Heart right ventricle (tissue), 16 donors: ENCODE measurements at regions of chr12 and their contacts with region 1.

Region 1: DNA sequence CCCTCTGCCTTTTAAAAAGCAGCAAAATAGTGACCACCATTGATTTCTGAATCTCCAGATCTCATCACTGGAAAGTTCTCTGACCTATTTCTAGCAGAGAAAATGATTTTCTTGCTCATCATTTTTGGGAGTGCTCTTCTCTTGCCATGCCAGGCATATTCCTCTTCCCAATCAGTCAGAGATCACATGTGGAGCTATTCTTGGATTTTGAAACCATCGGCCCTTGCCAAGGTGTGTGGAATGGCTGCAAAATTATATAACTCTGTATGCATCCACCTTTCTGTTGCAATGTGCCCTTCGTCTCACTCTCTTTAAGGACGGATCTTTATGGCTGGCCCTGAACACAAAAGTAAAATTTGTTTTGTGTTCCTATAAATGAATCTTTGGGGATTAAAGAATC is 25.5 kb upstream of the LDHB start:
- DNase-seq: peak in 1 of 2 donors; percentile 13
- ATAC-seq: peak in 4 of 8 donors; percentile 59 to 75 (median 68)
- H3K4me3 ChIP-seq: no peak overlapping the region
- H3K27ac ChIP-seq: peak overlapping the region in 4 of 10 donors; percentile 37 to 54 (median 46)
- H3K4me1 ChIP-seq: peaks cover 0 to 24% (median 3%) of the 10 kb centered on the region in 9 donors
- H3K27me3 ChIP-seq: no peaks in the 10 kb centered on the region
- CTCF ChIP-seq: no peak

Region 2: GRCh38 chr12:21308785-21309184 is 374.3 kb before region 1 on chr12:
- intact Hi-C with region 1: loop called in 1 of 10 experiments (anchors 5 kb)
- DNase-seq: no peak
- ATAC-seq: no peak
- H3K4me3 ChIP-seq: no peak overlapping the region
- H3K27ac ChIP-seq: no peak overlapping the region
- H3K4me1 ChIP-seq: no peaks in the 10 kb centered on the region
- H3K27me3 ChIP-seq: no peaks in the 10 kb centered on the region
- CTCF ChIP-seq: no peak

Region 3: DNA sequence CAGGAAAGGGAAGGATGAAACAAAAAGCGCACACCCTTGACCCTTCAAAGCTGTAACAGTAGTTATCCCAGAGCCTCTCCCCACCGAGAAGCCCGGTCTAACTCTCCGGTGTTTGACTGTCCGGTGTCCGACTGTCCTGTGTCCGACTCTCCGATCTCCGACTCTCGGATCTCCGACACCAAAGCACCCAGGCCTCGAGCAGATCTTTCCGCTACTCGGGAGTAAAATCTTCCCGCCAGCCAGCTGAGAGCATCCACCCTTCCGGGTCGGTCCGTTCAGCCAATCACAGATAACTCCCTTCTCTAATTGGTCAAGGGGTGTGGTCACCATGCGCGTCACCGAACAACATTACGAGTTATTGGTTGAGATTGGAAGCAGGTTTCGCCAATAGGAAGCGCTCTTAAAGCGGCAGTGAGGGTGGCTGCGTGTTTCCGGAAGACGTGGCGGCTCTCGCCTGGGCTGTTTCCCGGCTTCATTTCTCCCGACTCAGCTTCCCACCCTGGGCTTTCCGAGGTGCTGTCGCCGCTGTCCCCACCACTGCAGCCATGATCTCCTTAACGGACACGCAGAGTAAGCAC is 181.6 kb before region 1 on chr12 and contains the starts of genes GOLT1B and RECQL:
- intact Hi-C with region 1: loop called in 3 of 10 experiments (anchors 5 to 10 kb)
- DNase-seq: peak; percentile 78 to 95
- ATAC-seq: peak; percentile 99 to 100 (median 99)
- H3K4me3 ChIP-seq: peak within 1 kb of the TSS; percentile 74 to 98 (median 90)
- H3K27ac ChIP-seq: peak within 1 kb of the TSS; percentile 68 to 92 (median 88)
- H3K4me1 ChIP-seq: peaks cover 0 to 66% (median 51%) of the 10 kb centered on the region in 9 donors
- H3K27me3 ChIP-seq: no peaks in the 10 kb centered on the region
- CTCF ChIP-seq: no peak
- total RNA-seq, gene GOLT1B: 12.0 to 25.4 (median 18.8) TPM
- total RNA-seq, gene RECQL: 18.4 to 40.5 (median 24.6) TPM

Region 4: DNA sequence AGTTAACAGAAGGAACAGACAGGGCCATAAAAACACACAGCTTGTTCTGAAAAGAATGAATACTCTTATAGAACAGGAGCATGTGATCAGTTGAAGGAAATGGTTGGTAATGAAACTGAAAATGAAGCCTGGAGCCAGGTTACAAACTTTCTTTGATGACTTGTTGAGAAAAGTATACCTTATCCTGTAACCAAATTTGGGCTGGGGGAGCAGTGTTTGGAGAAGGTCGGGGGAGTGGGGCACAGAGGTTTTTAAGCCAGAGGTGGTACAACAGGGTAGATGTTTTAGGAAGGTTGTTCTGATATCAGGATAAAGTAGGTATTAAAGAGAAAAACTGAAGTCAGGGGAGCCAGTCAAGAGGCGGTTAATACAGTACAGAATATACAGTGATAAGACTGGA is 173.3 kb before region 1 on chr12:
- intact Hi-C with region 1: loop called in 2 of 10 experiments (anchors 5 to 10 kb)
- DNase-seq: no peak
- ATAC-seq: no peak
- H3K4me3 ChIP-seq: no peak overlapping the region
- H3K27ac ChIP-seq: no peak overlapping the region
- H3K4me1 ChIP-seq: peaks cover 0 to 14% (median 5%) of the 10 kb centered on the region in 9 donors
- H3K27me3 ChIP-seq: no peaks in the 10 kb centered on the region
- CTCF ChIP-seq: no peak

Region 5: DNA sequence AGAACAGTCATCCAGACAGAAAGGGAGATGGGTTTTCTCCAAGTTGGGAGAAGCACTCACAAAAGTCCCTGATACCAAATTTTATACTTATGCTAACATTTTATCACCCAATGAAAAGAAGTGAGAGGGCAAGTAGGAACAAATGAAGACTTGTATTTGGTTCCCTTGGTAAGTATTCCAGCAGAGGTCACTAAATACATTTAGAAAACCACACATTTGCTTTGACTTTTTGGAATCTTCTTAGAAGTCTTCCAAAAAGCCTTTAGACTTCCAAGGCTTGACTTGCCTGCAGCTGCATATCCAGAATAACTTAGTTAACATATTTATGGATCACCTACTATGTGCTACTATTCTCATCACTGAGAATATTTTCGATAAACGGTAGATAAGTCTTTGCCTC is 75.4 kb before region 1 on chr12:
- intact Hi-C with region 1: loop called in 9 of 10 experiments (anchors 1 to 5 kb)
- DNase-seq: no peak
- ATAC-seq: peak in 4 of 8 donors; percentile 27 to 63 (median 47)
- H3K4me3 ChIP-seq: no peak overlapping the region
- H3K27ac ChIP-seq: no peak overlapping the region
- H3K4me1 ChIP-seq: peaks cover 0 to 7% (median 0%) of the 10 kb centered on the region in 9 donors
- H3K27me3 ChIP-seq: no peaks in the 10 kb centered on the region
- CTCF ChIP-seq: peak in 7 of 9 donors; percentile 41 to 70 (median 59)

Region 6: DNA sequence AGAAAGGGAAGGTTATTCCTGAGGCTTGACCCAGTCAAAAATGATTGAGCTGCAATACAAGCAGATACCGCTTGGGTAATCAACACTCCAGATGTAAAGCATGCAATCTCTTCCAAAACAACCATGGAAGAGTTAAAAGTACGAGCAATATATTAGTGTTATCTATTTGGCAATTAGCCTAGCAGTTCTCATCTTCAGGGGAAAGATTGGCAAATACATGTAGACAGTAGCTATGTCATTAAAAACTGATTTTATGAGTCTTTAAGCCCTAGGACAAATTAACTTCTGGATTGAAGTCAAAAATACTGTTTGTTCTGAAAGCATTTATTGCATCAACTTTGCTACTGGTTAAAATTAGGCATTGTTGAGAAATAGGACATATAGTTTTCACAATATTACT is 69.2 kb before region 1 on chr12:
- intact Hi-C with region 1: loop called in 4 of 10 experiments (anchors 2 to 5 kb)
- DNase-seq: no peak
- ATAC-seq: no peak
- H3K4me3 ChIP-seq: no peak overlapping the region
- H3K27ac ChIP-seq: no peak overlapping the region
- H3K4me1 ChIP-seq: peaks cover 0 to 27% (median 11%) of the 10 kb centered on the region in 9 donors
- H3K27me3 ChIP-seq: no peaks in the 10 kb centered on the region
- CTCF ChIP-seq: no peak

Region 7: DNA sequence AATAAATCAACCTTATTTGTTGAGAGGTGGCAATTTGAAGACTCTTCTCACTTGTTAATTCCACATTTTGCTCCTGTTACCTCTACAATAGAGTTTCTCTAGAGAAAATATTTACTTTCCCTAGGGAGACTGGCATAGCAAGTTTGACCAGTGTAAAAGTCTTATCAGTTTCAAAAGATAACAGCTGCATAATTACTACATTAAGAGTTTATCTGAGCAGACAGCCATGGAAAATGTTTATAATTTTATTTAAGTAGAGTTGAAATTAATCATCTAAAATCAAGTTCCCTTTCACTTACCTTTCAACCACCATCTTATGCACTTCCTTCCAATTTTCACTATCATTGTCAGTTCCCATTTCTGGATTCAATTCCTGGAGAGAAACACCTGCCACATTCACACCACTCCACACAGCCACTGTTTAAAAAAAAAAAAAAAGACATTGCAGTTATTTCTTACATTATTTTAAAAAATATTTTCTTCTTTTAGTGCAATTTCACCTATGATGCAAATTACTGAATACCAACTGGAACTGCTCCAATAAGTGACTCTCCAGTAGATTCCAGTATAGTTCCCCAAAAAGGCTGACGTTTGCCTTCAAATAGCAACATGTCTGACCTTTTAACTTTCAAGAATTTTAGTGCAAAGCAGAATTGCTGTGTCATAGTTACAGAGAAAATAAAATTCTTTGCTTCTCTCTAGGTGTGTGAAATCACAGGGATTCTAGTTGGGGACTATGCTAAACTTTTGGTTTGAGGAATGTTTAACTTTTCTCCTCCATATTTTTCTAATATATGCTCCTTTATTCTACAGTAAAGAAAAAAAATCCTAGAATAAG is 44.8 kb before region 1 on chr12:
- intact Hi-C with region 1: no loop called
- DNase-seq: no peak
- ATAC-seq: no peak
- H3K4me3 ChIP-seq: no peak overlapping the region
- H3K27ac ChIP-seq: peak overlapping the region in 9 of 10 donors; percentile 17 to 73 (median 39)
- H3K4me1 ChIP-seq: peaks cover 0 to 54% (median 25%) of the 10 kb centered on the region in 9 donors
- H3K27me3 ChIP-seq: no peaks in the 10 kb centered on the region
- CTCF ChIP-seq: no peak